ENCODE measurements at regions of chr1 and their contacts with region 1.

Region 1: DNA sequence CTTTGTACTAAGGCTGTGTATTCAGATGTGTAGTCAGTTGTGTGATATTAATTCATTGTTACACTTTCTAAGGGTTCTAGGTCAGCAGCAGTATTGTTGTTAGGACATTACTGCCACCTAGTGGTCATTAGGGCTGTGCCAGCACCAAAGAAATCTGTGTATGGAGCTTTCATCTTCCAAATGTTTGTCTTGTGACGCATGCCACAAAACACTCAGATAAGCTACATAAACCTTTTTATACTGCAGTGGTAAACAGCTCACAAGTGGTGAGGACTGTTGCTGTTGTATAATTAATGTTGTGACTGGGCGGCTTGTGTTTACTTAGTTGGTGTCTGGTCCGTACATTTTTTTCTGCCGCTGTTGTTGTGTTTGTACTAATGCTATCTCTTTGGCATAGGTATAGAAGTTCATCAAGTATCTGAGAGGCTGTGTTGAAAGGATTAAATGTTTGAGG is 51.7 kb downstream of the S1PR1 start:
- DNase-seq: peak; percentile 57
- H3K4me3 ChIP-seq: no peak overlapping the region; the same call in 1 of the 2 replicates
- CTCF ChIP-seq: peak; percentile 71

Region 2: GRCh38 chr1:100921109-100921706 is 367.3 kb before region 1 on chr1:
- CTCF ChIA-PET with region 1: interaction called, 153 read pairs
- POLR2A ChIA-PET with region 1: no interaction called
- DNase-seq: no peak
- H3K4me3 ChIP-seq: no peak overlapping the region
- CTCF ChIP-seq: peak; percentile 33

Region 3: GRCh38 chr1:100941098-100941527 is 347.4 kb before region 1 on chr1:
- CTCF ChIA-PET with region 1: interaction called, 24 read pairs
- POLR2A ChIA-PET with region 1: no interaction called
- DNase-seq: no peak
- H3K4me3 ChIP-seq: no peak overlapping the region
- CTCF ChIP-seq: no peak

Region 4: DNA sequence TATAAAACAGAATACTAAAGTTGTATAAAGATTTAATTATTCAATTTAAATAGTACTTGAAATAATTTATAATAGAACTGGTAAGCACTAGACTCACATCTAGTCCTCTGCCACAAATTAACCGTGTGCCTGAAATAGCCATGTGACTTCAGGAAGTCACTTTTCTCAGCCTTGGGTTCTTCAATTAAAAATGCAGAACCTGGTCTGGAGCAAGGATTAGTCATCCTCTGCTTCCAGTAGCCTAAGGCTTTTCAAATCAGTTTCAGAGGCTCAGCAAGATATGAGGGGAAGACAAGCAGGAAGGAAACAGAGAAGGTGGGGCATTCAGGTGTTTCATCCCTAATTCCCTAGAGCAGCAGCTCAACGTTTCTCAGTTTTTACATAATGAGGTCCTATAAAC is 286.0 kb before region 1 on chr1:
- CTCF ChIA-PET with region 1: interaction called, 10 read pairs
- POLR2A ChIA-PET with region 1: no interaction called
- DNase-seq: no peak
- H3K4me3 ChIP-seq: no peak overlapping the region
- CTCF ChIP-seq: no peak

Region 5: DNA sequence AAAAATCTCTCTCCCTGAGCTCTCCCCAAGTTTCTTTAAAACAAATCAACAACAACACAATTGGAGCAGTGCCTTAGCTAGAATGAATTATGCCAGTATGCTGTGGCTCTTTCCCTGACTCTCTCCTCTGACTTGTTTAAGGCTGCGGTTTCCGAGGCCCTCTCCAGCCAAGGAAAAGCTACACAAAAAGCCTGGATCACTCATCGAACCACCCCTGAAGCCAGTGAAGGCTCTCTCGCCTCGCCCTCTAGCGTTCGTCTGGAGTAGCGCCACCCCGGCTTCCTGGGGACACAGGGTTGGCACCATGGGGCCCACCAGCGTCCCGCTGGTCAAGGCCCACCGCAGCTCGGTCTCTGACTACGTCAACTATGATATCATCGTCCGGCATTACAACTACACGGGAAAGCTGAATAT is 49.8 kb before region 1 on chr1:
- CTCF ChIA-PET with region 1: interaction called, 51 read pairs
- POLR2A ChIA-PET with region 1: no interaction called
- DNase-seq: peak; percentile 53
- H3K4me3 ChIP-seq: peak overlapping the region; percentile 74
- CTCF ChIP-seq: peak; percentile 98

Region 6: DNA sequence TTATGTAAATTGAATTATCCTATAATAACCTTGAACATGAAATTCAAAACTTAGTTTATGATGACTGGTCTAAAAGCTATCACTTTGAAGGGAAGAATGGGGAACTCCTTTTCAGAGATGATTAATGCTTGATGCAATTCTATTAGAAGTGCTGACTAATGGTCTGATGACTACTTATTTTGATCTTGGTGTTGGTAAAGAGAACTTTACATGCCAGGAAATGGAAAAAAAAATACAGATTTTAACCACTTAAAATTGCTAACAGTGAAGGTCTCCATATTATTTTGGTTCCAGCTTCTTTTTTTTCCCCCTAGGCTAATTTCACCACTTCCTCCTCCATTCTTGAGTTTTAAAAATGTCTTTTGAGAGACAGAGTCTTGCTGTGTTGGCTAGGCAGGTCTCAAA is 28.8 kb before region 1 on chr1:
- CTCF ChIA-PET with region 1: interaction called, 22 read pairs
- POLR2A ChIA-PET with region 1: no interaction called
- DNase-seq: peak; percentile 42
- H3K4me3 ChIP-seq: no peak overlapping the region
- CTCF ChIP-seq: no peak

Region 7: GRCh38 chr1:101309334-101310311 is 21.1 kb after region 1 on chr1:
- CTCF ChIA-PET with region 1: interaction called, 18 read pairs
- POLR2A ChIA-PET with region 1: no interaction called
- DNase-seq: no peak
- H3K4me3 ChIP-seq: peak overlapping the region; percentile 46
- CTCF ChIP-seq: peak; percentile 86

Region 8: DNA sequence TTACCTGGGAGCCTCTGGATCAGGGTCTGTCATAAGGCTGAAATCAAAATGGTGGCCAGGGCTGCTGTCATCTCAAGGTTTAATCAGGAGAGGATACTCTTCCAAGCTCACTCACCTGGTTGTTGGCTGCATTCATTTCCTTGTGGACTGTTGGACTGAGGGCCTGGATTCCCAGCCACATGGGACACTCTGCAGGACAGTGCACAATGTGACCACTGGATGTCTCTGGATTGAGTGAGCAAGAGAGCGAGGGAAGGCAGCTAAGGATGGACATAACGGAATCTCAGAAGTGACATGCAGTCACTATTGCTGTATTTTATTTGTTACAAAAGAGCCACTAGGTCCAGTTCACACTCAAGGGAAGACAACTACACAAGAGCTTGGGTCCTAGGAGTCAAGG is 177.4 kb after region 1 on chr1:
- CTCF ChIA-PET with region 1: no interaction called
- POLR2A ChIA-PET with region 1: no interaction called
- DNase-seq: no peak
- H3K4me3 ChIP-seq: no peak overlapping the region
- CTCF ChIP-seq: no peak